ENCODE measurements at regions of chr17 and their contacts with region 1.

Region 1: GRCh38 chr17:42428141-42428944 is 5.3 kb upstream of the CAVIN1 start:
- DNase-seq: peak; percentile 91
- ATAC-seq: peak; percentile 88
- H3K4me3 ChIP-seq: peak overlapping the region in 2 of 3 experiments; percentile 7 to 47; a peak in 2 of 6 replicates
- H3K27ac ChIP-seq: peak overlapping the region; percentile 73
- H3K4me1 ChIP-seq: peaks cover 79% of the 10 kb centered on the region
- H3K27me3 ChIP-seq: no peaks in the 10 kb centered on the region
- CTCF ChIP-seq: peak; percentile 90
- EP300 ChIP-seq: peak in 1 of 2 experiments; percentile 85; a peak in 1 of 4 replicates
- POLR2A ChIP-seq: no peak
- RAD21 ChIP-seq: peak; percentile 78

Region 2: GRCh38 chr17:42347198-42347597 is 81.1 kb before region 1 on chr17:
- CTCF ChIA-PET with region 1: no interaction called
- POLR2A ChIA-PET with region 1: no interaction called
- in situ Hi-C with region 1: no loop called
- intact Hi-C with region 1: no loop called
- DNase-seq: no peak
- ATAC-seq: no peak
- H3K4me3 ChIP-seq: no peak overlapping the region
- H3K27ac ChIP-seq: no peak overlapping the region
- H3K4me1 ChIP-seq: peaks cover 30% of the 10 kb centered on the region
- H3K27me3 ChIP-seq: no peaks in the 10 kb centered on the region
- CTCF ChIP-seq: no peak
- EP300 ChIP-seq: no peak
- POLR2A ChIP-seq: no peak
- RAD21 ChIP-seq: no peak

Region 3: GRCh38 chr17:42459256-42459800 is 31.0 kb after region 1 on chr17:
- CTCF ChIA-PET with region 1: no interaction called
- POLR2A ChIA-PET with region 1: interaction called, 9 read pairs
- in situ Hi-C with region 1: no loop called
- intact Hi-C with region 1: loop called (anchors 2 kb)
- DNase-seq: peak; percentile 65
- ATAC-seq: peak; percentile 82
- H3K4me3 ChIP-seq: peak overlapping the region; percentile 85 to 93 (median 90)
- H3K27ac ChIP-seq: peak overlapping the region; percentile 79
- H3K4me1 ChIP-seq: peaks cover 67% of the 10 kb centered on the region
- H3K27me3 ChIP-seq: no peaks in the 10 kb centered on the region; a peak in 1 of 5 replicates
- CTCF ChIP-seq: peak; percentile 77
- EP300 ChIP-seq: no peak
- POLR2A ChIP-seq: no peak
- RAD21 ChIP-seq: 0 out of 2 replicates have a peak, but pooled peaks have one; percentile 7

Region 4: GRCh38 chr17:42472709-42473521 is 44.6 kb after region 1 on chr17:
- CTCF ChIA-PET with region 1: no interaction called
- POLR2A ChIA-PET with region 1: no interaction called
- in situ Hi-C with region 1: no loop called
- intact Hi-C with region 1: no loop called
- DNase-seq: no peak
- ATAC-seq: no peak
- H3K4me3 ChIP-seq: no peak overlapping the region
- H3K27ac ChIP-seq: no peak overlapping the region
- H3K4me1 ChIP-seq: peaks cover 32% of the 10 kb centered on the region
- H3K27me3 ChIP-seq: no peaks in the 10 kb centered on the region
- CTCF ChIP-seq: no peak
- EP300 ChIP-seq: no peak
- POLR2A ChIP-seq: no peak
- RAD21 ChIP-seq: no peak

Region 5: DNA sequence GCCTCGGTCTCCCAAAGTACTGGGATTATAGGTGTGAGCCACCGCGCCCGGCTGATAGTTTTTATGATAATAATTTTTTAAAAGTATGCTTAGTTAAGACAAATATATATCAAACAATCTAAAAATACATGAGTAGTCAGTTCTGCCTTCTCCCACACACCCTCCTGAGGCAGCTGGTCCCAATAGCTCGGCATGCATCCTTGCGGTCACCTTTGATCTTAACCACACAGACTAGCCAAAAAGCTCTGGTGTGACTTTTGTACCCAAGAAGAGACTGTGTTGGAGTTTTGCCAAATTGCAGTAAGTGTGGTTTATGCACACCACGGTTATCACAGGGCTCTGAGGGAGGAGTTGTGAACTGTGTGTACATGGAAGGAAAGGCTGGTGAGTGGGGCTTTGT is 56.0 kb after region 1 on chr17:
- CTCF ChIA-PET with region 1: interaction called, 3 read pairs
- POLR2A ChIA-PET with region 1: interaction called, 10 read pairs
- in situ Hi-C with region 1: no loop called
- intact Hi-C with region 1: loop called (anchors 10 kb)
- DNase-seq: peak; percentile 99
- ATAC-seq: peak; percentile 96
- H3K4me3 ChIP-seq: no peak overlapping the region
- H3K27ac ChIP-seq: peak overlapping the region; percentile 53
- H3K4me1 ChIP-seq: peaks cover 49% of the 10 kb centered on the region
- H3K27me3 ChIP-seq: no peaks in the 10 kb centered on the region
- CTCF ChIP-seq: no peak
- EP300 ChIP-seq: peak; percentile 6 to 88; a peak in 2 of 4 replicates
- POLR2A ChIP-seq: no peak
- RAD21 ChIP-seq: peak; percentile 29; the same call in 1 of the 2 replicates

Region 6: DNA sequence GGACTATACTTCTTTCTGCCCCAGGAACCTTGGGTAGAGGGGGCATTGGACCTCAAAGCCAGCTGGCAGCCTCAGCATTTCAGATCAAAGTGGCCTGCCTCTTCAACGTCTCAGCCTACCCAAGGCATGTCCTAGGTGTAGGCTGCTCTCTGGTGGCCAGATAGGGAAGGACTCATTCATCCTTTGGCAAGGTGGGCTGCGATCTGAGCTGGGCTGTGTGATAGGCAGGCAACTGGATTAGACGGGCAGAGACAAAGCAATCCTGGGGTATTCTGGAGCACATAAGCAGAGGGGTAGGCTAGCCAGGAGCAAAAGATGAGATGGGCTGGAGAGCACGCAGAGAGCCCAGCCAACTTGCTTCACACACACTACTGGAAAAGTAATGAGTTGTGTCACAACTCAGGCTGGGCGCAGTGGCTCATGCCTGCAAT is 98.9 kb after region 1 on chr17:
- CTCF ChIA-PET with region 1: interaction called, 12 read pairs
- POLR2A ChIA-PET with region 1: interaction called, 7 read pairs
- in situ Hi-C with region 1: no loop called
- intact Hi-C with region 1: no loop called
- DNase-seq: peak; percentile 85
- ATAC-seq: peak; percentile 68
- H3K4me3 ChIP-seq: peak overlapping the region in 1 of 3 experiments; percentile 40; a peak in 2 of 6 replicates
- H3K27ac ChIP-seq: no peak overlapping the region
- H3K4me1 ChIP-seq: peaks cover 92% of the 10 kb centered on the region
- H3K27me3 ChIP-seq: no peaks in the 10 kb centered on the region
- CTCF ChIP-seq: peak; percentile 99
- EP300 ChIP-seq: no peak
- POLR2A ChIP-seq: no peak
- RAD21 ChIP-seq: peak; percentile 95

Region 7: GRCh38 chr17:42586514-42587230 is 158.3 kb after region 1 on chr17:
- CTCF ChIA-PET with region 1: no interaction called
- POLR2A ChIA-PET with region 1: no interaction called
- in situ Hi-C with region 1: no loop called
- intact Hi-C with region 1: no loop called
- DNase-seq: no peak
- ATAC-seq: no peak
- H3K4me3 ChIP-seq: no peak overlapping the region
- H3K27ac ChIP-seq: no peak overlapping the region
- H3K4me1 ChIP-seq: no peaks in the 10 kb centered on the region
- H3K27me3 ChIP-seq: no peaks in the 10 kb centered on the region
- CTCF ChIP-seq: no peak
- EP300 ChIP-seq: no peak
- POLR2A ChIP-seq: no peak
- RAD21 ChIP-seq: no peak

Region 8: DNA sequence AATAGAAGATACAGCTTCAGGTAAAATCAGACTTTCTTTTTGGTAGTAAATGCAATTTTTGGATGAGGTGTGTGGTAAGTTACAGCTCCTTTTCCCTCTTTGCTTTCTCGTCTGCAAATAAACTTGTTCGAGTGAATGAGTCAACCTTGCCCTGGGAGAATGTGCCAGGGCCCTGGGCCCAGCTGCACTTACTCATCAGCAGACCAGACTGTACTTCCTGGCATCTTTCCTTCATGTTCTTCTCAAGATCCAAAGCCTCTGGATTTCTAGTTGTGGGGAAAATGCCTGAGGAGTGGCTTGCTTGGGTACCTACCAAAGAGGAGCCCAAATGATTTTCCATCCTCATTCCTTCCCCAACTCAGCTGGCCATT is 466.8 kb after region 1 on chr17:
- CTCF ChIA-PET with region 1: no interaction called
- POLR2A ChIA-PET with region 1: no interaction called
- in situ Hi-C with region 1: no loop called
- intact Hi-C with region 1: no loop called
- DNase-seq: no peak
- ATAC-seq: no peak
- H3K4me3 ChIP-seq: peak overlapping the region; percentile 9 to 57 (median 22); a peak in 4 of 6 replicates
- H3K27ac ChIP-seq: peak overlapping the region; percentile 85
- H3K4me1 ChIP-seq: peaks cover 95% of the 10 kb centered on the region
- H3K27me3 ChIP-seq: no peaks in the 10 kb centered on the region
- CTCF ChIP-seq: no peak
- EP300 ChIP-seq: no peak
- POLR2A ChIP-seq: no peak
- RAD21 ChIP-seq: no peak

Measured in HepG2 (cell line).